Activated T-helper 1 cell treated with anti-CD3 and anti-CD28 coated beads, Interleukin-12 subunit alpha, Interleukin-12 subunit beta, Interleukin-2, Interleukin-4 antibody, amounts not matched to agents 30 ng/mL and 10 ng/mL and 1 ng/mL, durations not matched to agents 14 hours and 24 hours and 36 hours (primary cell): ENCODE measurements at regions of chr6 and their contacts with region 1.

Region 1: GRCh38 chr6:161273752-161274487 is at the start of gene AGPAT4:
- DNase-seq: peak; percentile 73
- H3K4me3 Mint-ChIP-seq: peak within 1 kb of the TSS; percentile 91
- H3K27ac Mint-ChIP-seq: peak within 1 kb of the TSS; percentile 97
- H3K4me1 Mint-ChIP-seq: peaks cover 41% of the 10 kb centered on the region
- H3K27me3 Mint-ChIP-seq: peaks cover 9% of the 10 kb centered on the region
- total RNA-seq, gene AGPAT4: 7.8 and 8.6 TPM in 2 replicates

Region 2: DNA sequence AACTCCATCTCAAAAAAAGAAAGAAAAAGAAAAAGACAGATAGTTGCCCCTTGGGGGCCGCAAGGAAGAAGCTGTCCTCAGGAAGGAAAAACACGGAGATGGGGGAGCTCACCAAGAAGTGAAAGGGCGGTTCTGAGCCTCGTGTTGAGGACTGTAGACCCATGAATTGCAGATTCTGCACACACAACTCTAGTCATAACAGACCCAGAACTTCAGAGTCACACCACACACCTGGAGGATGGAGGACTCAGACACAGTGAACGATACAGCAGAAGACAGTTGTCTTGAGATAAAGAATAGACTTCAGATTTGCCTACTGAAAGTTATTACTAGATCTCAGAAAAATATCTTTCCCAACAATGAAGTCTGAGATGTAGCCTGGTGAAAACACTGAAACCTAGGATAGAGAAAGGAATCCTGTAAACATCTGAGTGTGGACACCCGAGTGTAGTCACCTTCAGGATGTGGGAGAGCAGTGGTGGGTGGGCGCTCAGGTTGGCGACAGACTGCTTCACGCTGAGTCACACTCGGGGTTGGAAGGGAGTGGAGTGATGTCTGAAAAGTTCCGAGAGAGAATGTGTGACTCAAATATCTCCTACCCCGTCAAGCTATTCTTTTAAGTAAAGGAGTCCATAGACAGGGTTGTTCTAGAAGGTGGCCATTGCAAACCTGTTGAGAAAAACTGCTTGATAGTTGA is 194.2 kb before region 1 on chr6:
- intact Hi-C with region 1: loop called (anchors 10 kb)
- DNase-seq: peak; percentile 22
- H3K4me3 Mint-ChIP-seq: peak overlapping the region; percentile 28
- H3K27ac Mint-ChIP-seq: peak overlapping the region; percentile 73
- H3K4me1 Mint-ChIP-seq: no peaks in the 10 kb centered on the region
- H3K27me3 Mint-ChIP-seq: no peaks in the 10 kb centered on the region

Region 3: DNA sequence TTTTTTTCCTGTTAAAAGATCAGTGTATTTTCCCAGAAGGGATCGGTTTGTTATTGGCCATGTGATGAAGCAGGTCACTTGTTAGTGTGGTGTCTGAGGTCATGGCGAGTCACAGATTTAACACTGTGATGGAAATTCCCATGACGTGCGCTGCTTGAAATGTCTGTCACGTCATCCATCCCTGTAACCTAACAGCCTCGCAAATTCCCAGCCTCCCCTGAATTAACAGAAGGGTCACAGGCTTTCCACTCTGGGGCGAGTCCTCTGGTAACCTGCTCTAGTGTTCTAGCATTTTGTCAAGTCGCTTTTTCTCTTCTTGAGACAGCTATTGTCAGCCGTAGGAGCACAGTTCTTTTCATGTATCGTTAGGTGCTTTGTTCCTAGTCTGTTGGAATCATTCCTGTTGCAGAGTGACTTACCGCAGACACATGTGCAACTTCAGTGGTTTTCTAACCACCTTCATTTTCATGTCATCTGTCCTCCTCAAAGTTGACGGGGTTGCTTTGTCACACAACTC is 145.2 kb before region 1 on chr6:
- intact Hi-C with region 1: loop called (anchors 2 kb)
- DNase-seq: peak; percentile 10
- H3K4me3 Mint-ChIP-seq: no peak overlapping the region
- H3K27ac Mint-ChIP-seq: peak overlapping the region; percentile 79
- H3K4me1 Mint-ChIP-seq: peaks cover 27% of the 10 kb centered on the region
- H3K27me3 Mint-ChIP-seq: no peaks in the 10 kb centered on the region

Region 4: DNA sequence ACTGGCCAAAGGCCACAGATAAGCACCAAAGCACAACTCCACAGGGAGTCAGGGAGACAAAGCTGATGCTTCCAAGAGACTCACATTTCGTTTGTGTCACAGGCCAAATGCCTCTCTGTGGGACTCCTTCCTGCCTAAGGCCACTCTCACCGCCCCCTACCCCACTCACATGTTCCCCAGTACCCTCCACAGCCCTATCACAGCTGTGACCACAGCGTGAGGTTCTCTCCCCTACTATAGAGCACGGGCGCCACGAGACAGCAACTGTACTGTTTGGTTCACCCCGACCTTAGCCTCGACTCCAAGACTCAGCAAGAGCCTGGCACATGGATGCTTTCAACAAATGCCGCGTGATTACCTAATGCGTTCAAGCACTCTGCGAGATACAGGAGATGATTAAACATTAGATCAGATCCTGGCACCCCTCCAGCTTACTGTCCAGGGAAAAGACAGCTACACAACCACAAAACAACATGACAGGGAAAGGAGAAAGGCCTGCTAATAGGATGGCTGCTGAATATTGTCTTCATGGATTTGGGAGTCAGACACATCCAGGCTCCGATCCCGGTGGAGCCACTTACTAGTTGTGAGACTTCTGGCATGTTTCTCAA is 105.5 kb before region 1 on chr6:
- intact Hi-C with region 1: no loop called
- DNase-seq: no peak
- H3K4me3 Mint-ChIP-seq: no peak overlapping the region
- H3K27ac Mint-ChIP-seq: no peak overlapping the region
- H3K4me1 Mint-ChIP-seq: peaks cover 4% of the 10 kb centered on the region
- H3K27me3 Mint-ChIP-seq: no peaks in the 10 kb centered on the region

Region 5: GRCh38 chr6:161235776-161236633 is 37.9 kb before region 1 on chr6:
- intact Hi-C with region 1: loop called (anchors 2 kb)
- DNase-seq: no peak
- H3K4me3 Mint-ChIP-seq: peak overlapping the region; percentile 30
- H3K27ac Mint-ChIP-seq: peak overlapping the region; percentile 71
- H3K4me1 Mint-ChIP-seq: peaks cover 32% of the 10 kb centered on the region
- H3K27me3 Mint-ChIP-seq: no peaks in the 10 kb centered on the region

Region 6: GRCh38 chr6:162727309-162728182 is 1453.6 kb after region 1 on chr6 and contains the starts of genes PACRG and PRKN:
- intact Hi-C with region 1: loop called (anchors 5 kb)
- DNase-seq: peak; percentile 95
- H3K4me3 Mint-ChIP-seq: peak within 1 kb of the TSS; percentile 89
- H3K27ac Mint-ChIP-seq: peak within 1 kb of the TSS; percentile 86
- H3K4me1 Mint-ChIP-seq: peaks cover 11% of the 10 kb centered on the region
- H3K27me3 Mint-ChIP-seq: peaks cover 7% of the 10 kb centered on the region
- total RNA-seq, gene PACRG: 0.36 TPM in 1 of 2 replicates, not detected in the other
- total RNA-seq, gene PRKN: not detected in 2 replicates